H1 (cell line): ENCODE measurements at regions of chr14 and their contacts with region 1.

Region 1: DNA sequence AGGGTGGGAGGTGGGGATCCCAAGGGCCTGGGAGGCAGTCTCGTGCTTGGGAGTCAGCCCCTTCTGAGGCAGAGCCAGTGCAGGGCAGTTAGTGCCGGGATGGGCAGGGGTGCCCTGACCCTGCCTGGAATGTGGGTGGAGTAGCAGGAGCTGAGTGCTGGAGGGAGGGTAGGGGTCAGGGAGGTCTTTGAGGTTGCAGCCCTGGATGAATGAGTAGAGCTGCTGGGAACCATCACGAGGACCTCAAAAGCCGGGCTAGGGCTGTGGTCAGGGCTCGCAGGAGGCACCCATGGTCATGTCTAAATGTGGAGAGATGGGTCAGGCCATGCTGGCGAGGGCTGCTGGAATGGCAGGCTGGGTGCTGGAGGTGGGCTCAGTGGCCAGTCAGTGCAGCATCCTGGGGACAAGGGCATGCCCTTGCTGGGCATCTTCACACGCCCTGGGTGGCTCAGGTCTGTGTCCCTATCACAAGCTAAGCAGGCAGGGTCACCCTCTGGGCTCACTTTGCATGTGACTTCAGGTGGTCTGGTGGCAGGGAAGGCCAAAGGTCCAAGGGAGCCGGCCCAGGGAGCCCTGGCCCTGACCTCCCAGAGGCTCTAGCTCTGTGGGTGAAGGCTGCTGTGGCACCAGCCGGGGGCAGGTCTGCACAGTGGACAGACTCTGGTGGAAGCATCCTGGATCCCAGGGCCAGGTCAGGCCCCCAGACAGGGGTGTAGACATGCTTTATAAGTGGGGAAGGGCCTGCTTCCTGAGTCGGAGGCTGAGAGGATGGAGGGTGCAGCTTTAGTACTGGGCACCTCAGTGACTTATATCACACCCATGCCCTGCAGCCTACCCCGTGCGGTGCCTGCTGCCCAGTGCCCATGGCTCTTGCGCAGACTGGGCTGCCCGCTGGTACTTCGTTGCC is 24.5 kb downstream of the PAPLN start:
- DNase-seq: no peak
- H3K4me3 ChIP-seq: no peak overlapping the region
- H3K27ac ChIP-seq: no peak overlapping the region
- H3K4me1 ChIP-seq: no peaks in the 10 kb centered on the region; a peak in 2 of 7 replicates
- H3K27me3 ChIP-seq: no peaks in the 10 kb centered on the region
- CTCF ChIP-seq: no peak
- EP300 ChIP-seq: no peak
- POLR2A ChIP-seq: no peak
- RAD21 ChIP-seq: no peak

Region 2: GRCh38 chr14:73245401-73246325 is 16.1 kb before region 1 on chr14:
- CTCF ChIA-PET with region 1: interaction called, 6 read pairs
- POLR2A ChIA-PET with region 1: interaction called, 21 read pairs
- DNase-seq: no peak
- H3K4me3 ChIP-seq: peak overlapping the region; percentile 44 to 58 (median 50)
- H3K27ac ChIP-seq: no peak overlapping the region
- H3K4me1 ChIP-seq: peaks cover 0 to 12% (median 6%) of the 10 kb centered on the region in 4 experiments; a peak in 4 of 7 replicates
- H3K27me3 ChIP-seq: no peaks in the 10 kb centered on the region
- CTCF ChIP-seq: no peak
- EP300 ChIP-seq: no peak
- POLR2A ChIP-seq: no peak
- RAD21 ChIP-seq: no peak

Region 3: GRCh38 chr14:73283608-73284379 is 22.0 kb after region 1 on chr14:
- CTCF ChIA-PET with region 1: interaction called, 15 read pairs
- POLR2A ChIA-PET with region 1: interaction called, 11 read pairs
- DNase-seq: peak in 1 of 2 experiments; percentile 44
- H3K4me3 ChIP-seq: peak overlapping the region in 1 of 4 experiments; percentile 8; a peak in 1 of 8 replicates
- H3K27ac ChIP-seq: no peak overlapping the region
- H3K4me1 ChIP-seq: peaks cover 3 to 28% (median 19%) of the 10 kb centered on the region in 4 experiments
- H3K27me3 ChIP-seq: no peaks in the 10 kb centered on the region
- CTCF ChIP-seq: peak; percentile 12 to 75 (median 59)
- EP300 ChIP-seq: no peak
- POLR2A ChIP-seq: no peak
- RAD21 ChIP-seq: peak; percentile 79 to 82

Region 4: DNA sequence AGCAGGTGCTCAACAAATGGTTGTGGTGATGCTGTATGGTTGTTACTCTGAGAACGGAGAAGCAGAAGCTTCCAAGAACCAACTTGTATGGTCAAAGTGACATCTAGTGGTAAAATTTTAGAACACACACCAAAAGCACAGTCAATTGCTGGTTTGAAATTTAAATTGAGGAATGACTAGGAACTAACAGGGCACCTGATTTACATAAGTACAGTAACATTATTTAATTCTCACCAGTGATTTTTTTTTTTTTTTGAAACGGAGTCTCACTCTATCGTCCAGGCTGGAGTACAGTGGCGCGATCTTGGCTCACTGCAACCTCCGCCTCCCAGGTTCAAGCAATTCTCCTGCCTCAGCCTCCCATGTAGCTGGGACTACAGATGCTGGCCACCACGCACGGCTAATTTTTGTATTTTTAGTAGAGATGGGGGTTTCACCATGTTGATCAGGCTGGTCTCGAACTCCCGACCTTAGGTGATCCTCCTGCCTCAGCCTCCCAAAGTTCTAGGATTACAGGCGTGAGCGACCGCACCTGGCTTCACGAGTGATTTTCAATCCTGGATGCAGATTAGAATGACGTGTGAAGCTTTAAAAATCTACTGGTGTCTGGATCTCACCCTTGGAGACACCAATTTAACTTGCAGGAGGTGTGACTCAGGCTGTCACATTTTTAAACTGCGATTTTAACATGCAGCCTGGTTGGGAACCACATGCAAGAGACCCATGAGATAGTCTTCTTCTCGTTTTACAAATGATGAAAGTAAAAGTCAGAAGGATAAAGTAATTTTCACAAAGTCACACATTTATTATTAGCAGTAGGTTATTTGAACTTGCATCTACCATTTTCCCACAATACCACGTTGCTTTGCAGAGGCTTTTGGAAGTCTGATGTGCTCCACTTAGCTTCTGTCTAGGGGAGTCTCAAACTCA is 210.7 kb after region 1 on chr14:
- CTCF ChIA-PET with region 1: interaction called, 14 read pairs
- POLR2A ChIA-PET with region 1: no interaction called
- DNase-seq: no peak
- H3K4me3 ChIP-seq: no peak overlapping the region
- H3K27ac ChIP-seq: no peak overlapping the region
- H3K4me1 ChIP-seq: no peaks in the 10 kb centered on the region
- H3K27me3 ChIP-seq: no peaks in the 10 kb centered on the region
- CTCF ChIP-seq: peak in 2 of 3 experiments; percentile 67 to 78; a peak in 3 of 4 replicates
- EP300 ChIP-seq: no peak
- POLR2A ChIP-seq: no peak
- RAD21 ChIP-seq: peak; percentile 95 to 96